ENCODE measurements at regions of chr15 and their contacts with region 1.

Region 1: DNA sequence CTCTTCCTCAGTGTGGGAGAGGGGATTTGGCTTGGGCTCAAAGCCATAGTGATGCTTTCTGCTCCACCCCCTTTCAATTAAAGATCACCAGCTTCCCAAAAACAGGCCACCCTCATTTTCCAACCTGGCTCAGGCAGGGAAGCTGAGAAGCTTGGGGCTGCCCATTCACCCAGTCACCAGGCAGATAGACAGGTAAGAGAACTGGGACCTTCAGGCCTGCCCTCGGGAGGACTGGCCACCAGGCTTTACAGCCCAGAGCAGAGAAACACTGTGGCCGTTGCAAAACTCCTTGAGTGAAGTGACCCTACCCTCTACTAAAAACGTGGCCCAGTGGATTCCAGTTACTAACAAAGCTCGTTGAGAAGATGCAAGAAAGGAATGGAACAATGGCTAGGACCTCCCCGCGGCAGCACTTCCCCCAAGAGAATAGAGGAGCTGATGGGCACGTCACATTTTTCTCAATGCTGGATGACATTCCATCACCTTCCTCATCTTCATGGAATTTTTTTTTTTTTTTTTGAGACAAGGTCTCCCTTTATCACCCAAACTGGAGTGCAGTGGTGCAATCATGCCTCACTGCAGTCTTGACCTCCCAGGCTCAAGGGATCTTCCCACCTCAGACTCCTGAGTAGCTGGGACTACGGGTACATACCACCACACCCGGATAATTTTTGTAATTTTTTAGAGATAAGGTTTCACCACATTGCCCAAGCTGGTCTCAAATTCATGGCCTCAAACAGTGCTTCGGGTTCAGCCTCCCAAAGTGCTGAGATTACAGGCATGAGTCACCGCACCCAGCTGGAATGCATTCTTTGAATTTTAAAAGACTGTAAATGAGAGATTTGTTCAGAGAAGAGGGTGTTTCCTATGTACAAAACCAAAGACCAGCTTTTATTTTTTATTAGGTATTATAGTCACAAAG is 37.9 kb downstream of the LIPC start:
- DNase-seq: no peak
- H3K4me3 Mint-ChIP-seq: no peak overlapping the region
- H3K27ac Mint-ChIP-seq: no peak overlapping the region
- H3K4me1 Mint-ChIP-seq: peaks cover 45% of the 10 kb centered on the region
- H3K27me3 Mint-ChIP-seq: peaks cover 12% of the 10 kb centered on the region

Region 2: DNA sequence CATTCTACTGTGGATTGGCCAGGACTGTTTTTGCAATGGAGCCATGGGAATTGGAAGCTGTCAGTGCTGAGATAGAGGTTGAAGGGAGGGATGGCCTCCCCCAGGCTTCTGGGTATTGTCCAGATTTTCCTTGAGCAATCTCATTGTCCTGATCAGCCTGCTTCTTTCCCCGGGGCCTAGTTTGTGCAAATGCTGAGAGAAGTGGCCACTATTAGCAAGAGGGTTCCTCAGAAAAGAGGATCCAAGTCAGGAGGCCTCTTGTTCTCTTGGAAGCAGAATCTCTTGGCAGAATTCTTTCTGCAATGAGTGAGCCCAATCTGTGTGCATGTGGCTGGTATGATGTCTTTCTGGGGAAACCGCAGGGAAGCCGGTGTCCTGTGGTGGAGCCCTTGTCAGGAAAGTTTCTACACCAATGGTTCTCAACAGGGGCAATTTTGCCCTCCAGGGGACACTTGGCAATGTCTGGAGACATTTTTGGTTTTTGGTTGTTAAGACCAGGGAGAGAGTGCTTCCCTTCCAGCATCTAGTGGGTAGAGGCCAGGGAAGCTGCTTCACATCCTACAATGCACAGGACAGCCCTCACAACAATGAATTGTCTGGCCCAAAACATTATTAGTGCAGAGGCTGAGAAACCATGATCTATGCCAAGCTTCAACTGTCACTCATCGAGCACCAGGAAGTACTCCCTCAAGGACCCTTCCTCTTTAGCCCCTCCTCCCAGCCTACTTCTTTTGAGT is 35.9 kb before region 1 on chr15:
- CTCF ChIA-PET with region 1: no interaction called
- POLR2A ChIA-PET with region 1: no interaction called
- DNase-seq: no peak
- H3K4me3 Mint-ChIP-seq: no peak overlapping the region
- H3K27ac Mint-ChIP-seq: no peak overlapping the region
- H3K4me1 Mint-ChIP-seq: peaks cover 1% of the 10 kb centered on the region
- H3K27me3 Mint-ChIP-seq: no peaks in the 10 kb centered on the region

Region 3: GRCh38 chr15:58457381-58457965 is 12.2 kb before region 1 on chr15:
- CTCF ChIA-PET with region 1: interaction called, 5 read pairs
- POLR2A ChIA-PET with region 1: interaction called, 28 read pairs
- DNase-seq: peak; percentile 53
- H3K4me3 Mint-ChIP-seq: no peak overlapping the region
- H3K27ac Mint-ChIP-seq: no peak overlapping the region
- H3K4me1 Mint-ChIP-seq: peaks cover 62% of the 10 kb centered on the region
- H3K27me3 Mint-ChIP-seq: no peaks in the 10 kb centered on the region

Region 4: DNA sequence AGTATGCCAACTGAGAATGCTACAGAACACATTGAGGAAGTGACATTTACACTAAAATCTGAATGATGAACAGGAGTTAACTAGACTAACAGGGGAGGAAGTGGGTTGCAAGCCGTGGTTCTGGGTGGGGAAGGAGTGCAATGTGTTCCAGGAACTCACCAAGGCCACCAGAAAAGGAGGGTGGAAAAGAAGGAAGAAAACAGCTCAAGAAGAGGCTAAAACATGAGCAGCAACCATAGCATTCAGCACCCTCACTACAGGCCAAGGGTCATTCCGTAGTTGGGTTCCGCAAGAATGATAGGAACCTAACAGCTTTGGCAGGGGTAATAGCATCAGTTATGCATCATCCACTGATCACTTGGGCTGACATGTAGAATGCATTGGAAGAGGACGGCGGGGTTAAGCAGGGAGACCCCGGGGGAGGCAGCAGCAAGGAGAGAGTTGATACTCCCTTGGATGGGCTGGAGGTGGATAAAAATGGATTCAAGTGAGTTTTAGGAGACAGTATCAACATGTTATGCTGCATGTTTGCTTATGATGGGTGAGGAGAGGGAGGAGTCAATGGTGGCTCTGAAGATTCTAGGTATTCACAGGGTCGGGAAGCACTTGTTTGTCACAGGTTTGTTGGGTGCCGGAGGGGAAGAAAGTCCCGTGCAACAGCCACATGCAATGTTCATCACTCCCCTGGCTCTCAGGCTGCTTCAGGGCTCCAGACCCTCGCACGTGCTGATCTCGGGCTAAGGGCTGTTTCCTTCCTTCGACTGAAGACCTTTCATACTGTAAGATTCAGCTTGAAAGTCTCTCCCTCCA is 15.3 kb after region 1 on chr15:
- CTCF ChIA-PET with region 1: no interaction called
- POLR2A ChIA-PET with region 1: interaction called, 71 read pairs
- DNase-seq: peak; percentile 80
- H3K4me3 Mint-ChIP-seq: peak overlapping the region; percentile 40
- H3K27ac Mint-ChIP-seq: peak overlapping the region; percentile 95
- H3K4me1 Mint-ChIP-seq: peaks cover 56% of the 10 kb centered on the region
- H3K27me3 Mint-ChIP-seq: no peaks in the 10 kb centered on the region